WTC11 (cell line): ENCODE measurements at regions of chr12 and their contacts with region 1.

Region 1: DNA sequence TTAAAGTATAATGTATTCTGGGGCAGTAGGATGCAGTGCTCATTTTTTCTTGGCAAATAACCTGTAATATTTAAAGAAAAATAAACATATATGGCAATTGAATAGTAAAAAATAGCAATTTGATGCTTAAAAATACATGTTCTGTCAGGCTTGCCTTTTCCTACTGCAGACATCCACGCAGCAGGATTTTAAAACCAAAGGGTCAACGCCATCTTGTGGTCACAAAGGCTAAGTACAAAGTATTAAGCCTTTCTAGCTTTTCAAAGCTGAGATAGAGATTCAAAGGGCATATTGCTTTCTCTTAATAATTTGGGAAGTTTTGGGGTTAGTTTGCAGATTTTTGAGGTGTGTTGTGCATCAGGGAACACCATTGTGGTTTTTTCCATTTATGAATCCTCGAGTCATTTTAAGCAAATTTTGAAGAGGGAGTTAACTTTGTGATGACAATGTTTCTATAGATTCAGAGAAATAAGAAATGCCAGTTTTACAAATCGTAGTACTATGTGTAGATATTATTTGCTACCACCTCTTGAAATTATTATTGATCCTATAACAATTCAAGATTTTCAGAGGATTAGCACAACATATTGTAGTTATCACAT is 4.7 kb upstream of the CCER1 start:
- DNase-seq: no peak
- ATAC-seq: peak; percentile 76
- H3K4me3 Mint-ChIP-seq: no peak overlapping the region
- H3K27ac Mint-ChIP-seq: no peak overlapping the region
- H3K4me1 Mint-ChIP-seq: peaks cover 5% of the 10 kb centered on the region; the same call in 1 of the 2 replicates
- H3K27me3 Mint-ChIP-seq: no peaks in the 10 kb centered on the region
- CTCF ChIP-seq: peak; percentile 36; the same call in 1 of the 2 replicates

Region 2: GRCh38 chr12:90945070-90945649 is 14.5 kb before region 1 on chr12:
- CTCF ChIA-PET with region 1: interaction called, 19 read pairs
- POLR2A ChIA-PET with region 1: no interaction called
- DNase-seq: no peak
- ATAC-seq: 0 out of 2 replicates have a peak, but pooled peaks have one; percentile 30
- H3K4me3 Mint-ChIP-seq: no peak overlapping the region
- H3K27ac Mint-ChIP-seq: no peak overlapping the region
- H3K4me1 Mint-ChIP-seq: peaks cover 4% of the 10 kb centered on the region
- H3K27me3 Mint-ChIP-seq: no peaks in the 10 kb centered on the region
- CTCF ChIP-seq: no peak

Region 3: DNA sequence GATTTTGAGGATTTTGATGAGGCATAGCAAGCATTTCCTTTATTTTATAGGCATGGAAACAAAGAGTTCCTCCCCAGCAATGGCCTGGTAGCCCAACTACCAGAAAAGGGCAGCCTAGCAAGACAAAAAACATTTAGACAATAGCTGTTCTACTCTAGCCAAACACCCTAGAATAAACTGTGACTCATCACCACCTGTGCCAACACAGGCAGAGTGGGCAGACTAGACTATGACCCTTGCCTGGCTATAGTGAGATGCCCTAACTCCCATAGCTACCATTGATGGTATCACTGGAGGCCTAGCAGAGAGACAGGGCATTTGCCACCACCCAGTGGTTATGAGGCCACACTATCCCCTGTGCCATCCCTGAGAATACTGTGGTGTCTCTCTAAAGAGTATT is 10.8 kb after region 1 on chr12:
- CTCF ChIA-PET with region 1: interaction called, 11 read pairs
- POLR2A ChIA-PET with region 1: no interaction called
- DNase-seq: no peak
- ATAC-seq: no peak
- H3K4me3 Mint-ChIP-seq: no peak overlapping the region
- H3K27ac Mint-ChIP-seq: no peak overlapping the region
- H3K4me1 Mint-ChIP-seq: peaks cover 11% of the 10 kb centered on the region
- H3K27me3 Mint-ChIP-seq: no peaks in the 10 kb centered on the region
- CTCF ChIP-seq: no peak

Region 4: GRCh38 chr12:91091916-91092715 is 132.5 kb after region 1 on chr12:
- CTCF ChIA-PET with region 1: no interaction called
- POLR2A ChIA-PET with region 1: no interaction called
- DNase-seq: no peak
- ATAC-seq: no peak
- H3K4me3 Mint-ChIP-seq: no peak overlapping the region
- H3K27ac Mint-ChIP-seq: no peak overlapping the region
- H3K4me1 Mint-ChIP-seq: no peaks in the 10 kb centered on the region
- H3K27me3 Mint-ChIP-seq: peaks cover 4% of the 10 kb centered on the region
- CTCF ChIP-seq: no peak

Region 5: DNA sequence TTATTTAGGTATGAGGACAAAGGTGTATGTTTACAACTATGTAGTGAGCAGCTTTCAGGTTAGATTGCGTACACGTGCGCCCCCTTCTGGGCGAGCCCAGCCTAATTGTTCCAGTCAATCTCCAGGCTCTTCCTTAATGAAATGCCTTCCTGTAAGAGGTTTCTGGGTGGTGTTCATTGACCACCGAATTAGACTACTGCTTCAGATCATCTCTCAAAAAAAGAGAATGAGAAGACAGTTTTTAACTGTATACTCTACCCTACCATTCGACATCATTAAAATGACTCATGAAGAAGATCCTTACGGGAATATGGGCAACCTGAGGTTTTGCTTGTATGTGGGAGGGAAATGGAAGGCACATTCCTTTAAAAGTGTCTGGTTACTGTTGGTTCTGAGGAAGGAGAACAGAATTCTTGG is 149.5 kb after region 1 on chr12:
- CTCF ChIA-PET with region 1: interaction called, 11 read pairs
- POLR2A ChIA-PET with region 1: no interaction called
- DNase-seq: peak; percentile 82
- ATAC-seq: peak; percentile 99
- H3K4me3 Mint-ChIP-seq: no peak overlapping the region
- H3K27ac Mint-ChIP-seq: no peak overlapping the region
- H3K4me1 Mint-ChIP-seq: peaks cover 6% of the 10 kb centered on the region
- H3K27me3 Mint-ChIP-seq: no peaks in the 10 kb centered on the region; the same call in 1 of the 2 replicates
- CTCF ChIP-seq: peak; percentile 62; the same call in 1 of the 2 replicates